GM18951 (cell line): ENCODE measurements at regions of chr14 and their contacts with region 1.

Region 1: DNA sequence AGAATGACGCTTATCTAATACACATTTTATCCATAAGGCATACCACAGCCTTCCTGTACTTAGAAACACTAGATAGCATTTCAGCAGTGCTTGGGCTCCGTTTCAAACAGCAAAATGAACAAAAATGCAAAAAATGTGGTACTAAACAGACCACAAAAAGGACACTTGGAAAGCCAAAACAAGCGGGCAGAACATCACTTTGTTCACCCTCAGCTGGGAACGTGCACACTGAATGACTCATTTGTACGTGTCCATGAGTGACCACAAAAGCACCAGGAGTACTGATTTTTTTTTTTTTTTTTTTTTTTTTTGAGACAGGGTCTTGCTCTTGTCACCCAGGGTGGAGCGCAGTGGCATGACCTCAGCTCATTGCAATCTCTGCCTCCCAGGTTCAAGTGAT is 8.9 kb upstream of the FOXN3 start:
- POLR2A ChIP-seq: no peak

Region 2: DNA sequence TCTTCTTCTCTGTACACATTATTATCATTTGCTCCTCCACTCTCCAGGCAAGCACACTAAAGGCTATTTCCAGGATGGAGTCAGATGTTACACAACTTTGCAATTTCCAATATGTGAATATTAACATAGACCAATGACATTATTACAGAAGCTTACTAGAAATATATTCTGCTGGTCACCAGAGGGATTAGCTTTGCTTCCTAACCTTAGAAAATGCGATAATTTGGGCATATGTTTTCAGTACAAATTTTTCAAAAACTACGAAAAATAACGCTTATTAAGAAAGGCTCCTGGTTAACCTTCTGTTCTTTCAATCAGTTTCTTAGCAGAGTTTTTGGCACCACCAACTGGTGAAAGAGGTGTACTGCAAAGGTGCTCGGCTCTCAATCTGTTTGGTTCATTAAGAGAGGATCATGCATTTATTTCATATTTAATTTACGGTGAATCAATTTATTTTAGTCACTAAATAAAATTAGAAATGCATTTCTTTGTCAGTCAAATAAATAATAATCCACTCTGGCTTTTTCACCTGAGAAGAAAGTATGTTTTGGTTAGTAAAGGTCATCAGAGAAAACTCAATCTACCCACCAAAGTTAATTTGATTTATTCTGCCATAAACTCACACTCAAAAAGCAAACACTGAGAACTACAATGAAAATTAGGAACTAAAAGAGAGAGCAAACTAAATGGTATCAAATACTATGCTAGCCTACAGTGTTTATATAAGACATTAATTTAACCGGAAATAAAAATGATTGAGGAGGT is 489.4 kb after region 1 on chr14:
- in situ Hi-C with region 1: loop called (anchors 10 kb)
- POLR2A ChIP-seq: no peak